Activated T-helper 2 cell treated with anti-CD3 and anti-CD28 coated beads, Interferon-gamma antibody, Interleukin-2, Interleukin-4, amounts not matched to agents 10 μg/mL and 5 μg/mL and 100 μg/mL, durations not matched to agents 14 hours and 24 hours and 36 hours (primary cell): ENCODE measurements at regions of chr17 and their contacts with region 1.

Region 1: GRCh38 chr17:36948717-36949460 is at the start of gene AATF:
- DNase-seq: peak; percentile 97
- H3K4me3 Mint-ChIP-seq: peak within 1 kb of the TSS; percentile 90
- H3K27ac Mint-ChIP-seq: peak within 1 kb of the TSS; percentile 92
- H3K4me1 Mint-ChIP-seq: peaks cover 46% of the 10 kb centered on the region
- H3K27me3 Mint-ChIP-seq: peaks cover 37% of the 10 kb centered on the region
- total RNA-seq, gene AATF: 101 and 107 TPM in 2 replicates

Region 2: GRCh38 chr17:36989173-36989572 is 40.3 kb after region 1 on chr17:
- intact Hi-C with region 1: no loop called
- DNase-seq: no peak
- H3K4me3 Mint-ChIP-seq: no peak overlapping the region
- H3K27ac Mint-ChIP-seq: no peak overlapping the region
- H3K4me1 Mint-ChIP-seq: no peaks in the 10 kb centered on the region
- H3K27me3 Mint-ChIP-seq: no peaks in the 10 kb centered on the region

Region 3: GRCh38 chr17:37025847-37026530 is 77.1 kb after region 1 on chr17:
- intact Hi-C with region 1: loop called (anchors 5 kb)
- DNase-seq: peak; percentile 14
- H3K4me3 Mint-ChIP-seq: no peak overlapping the region
- H3K27ac Mint-ChIP-seq: peak overlapping the region; percentile 53
- H3K4me1 Mint-ChIP-seq: peaks cover 36% of the 10 kb centered on the region
- H3K27me3 Mint-ChIP-seq: no peaks in the 10 kb centered on the region

Region 4: GRCh38 chr17:37047631-37048104 is 98.8 kb after region 1 on chr17:
- intact Hi-C with region 1: loop called (anchors 1 kb)
- DNase-seq: peak; percentile 66
- H3K4me3 Mint-ChIP-seq: no peak overlapping the region
- H3K27ac Mint-ChIP-seq: peak overlapping the region; percentile 64
- H3K4me1 Mint-ChIP-seq: peaks cover 12% of the 10 kb centered on the region
- H3K27me3 Mint-ChIP-seq: no peaks in the 10 kb centered on the region

Region 5: DNA sequence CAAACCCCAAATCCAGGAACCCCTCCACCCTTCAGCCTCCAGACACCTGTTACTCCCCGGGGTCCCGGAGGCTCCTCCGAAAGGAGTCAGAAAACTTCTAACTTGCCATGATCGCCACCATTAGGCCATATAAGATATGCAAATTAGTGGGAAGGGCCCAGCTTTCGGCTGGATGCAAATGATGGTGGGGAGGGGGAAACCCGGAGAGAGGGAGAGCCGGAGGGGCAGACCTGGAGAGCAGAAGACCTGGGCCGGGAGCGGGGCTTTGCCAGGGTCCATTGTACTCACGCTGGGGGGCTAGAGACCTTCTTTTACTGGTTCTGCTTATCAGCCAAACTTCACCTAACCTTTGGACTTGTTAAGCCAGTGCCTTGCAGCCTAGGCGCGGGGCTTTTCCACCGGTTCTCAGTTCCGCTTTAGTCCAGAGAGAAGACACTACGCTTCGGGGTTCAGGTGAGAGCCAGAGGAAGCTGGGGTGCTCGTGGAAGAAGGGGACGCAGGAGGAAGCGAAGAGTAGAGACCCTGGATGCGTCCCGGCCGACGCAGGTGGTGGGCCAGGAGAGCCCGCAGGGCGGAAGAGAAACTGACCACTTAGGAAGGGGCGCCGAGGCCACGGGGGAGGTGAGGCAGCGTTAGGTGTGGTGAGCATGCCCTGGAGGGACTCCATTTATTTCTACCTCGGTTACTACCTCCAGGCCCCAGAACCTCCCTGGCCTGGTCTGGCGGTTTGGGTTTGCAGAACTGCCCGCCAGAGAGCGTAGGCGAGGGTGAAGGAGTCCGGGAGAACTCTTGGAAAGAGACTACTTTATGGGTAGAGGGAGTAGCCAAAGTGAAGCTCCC is 796.3 kb after region 1 on chr17 and contains the start of gene HNF1B:
- intact Hi-C with region 1: loop called (anchors 5 kb)
- DNase-seq: no peak
- H3K4me3 Mint-ChIP-seq: peak within 1 kb of the TSS; percentile 74
- H3K27ac Mint-ChIP-seq: peak within 1 kb of the TSS; percentile 49
- H3K4me1 Mint-ChIP-seq: peaks cover 29% of the 10 kb centered on the region
- H3K27me3 Mint-ChIP-seq: peaks cover 64% of the 10 kb centered on the region
- total RNA-seq, gene HNF1B: 4.6 and 5.0 TPM in 2 replicates